ENCODE measurements at regions of chr9 and their contacts with region 1.

Region 1: GRCh38 chr9:75185585-75186170 is 97.4 kb downstream of the OSTF1 start:
- DNase-seq: peak; percentile 65
- ATAC-seq: peak; percentile 90
- H3K4me3 Mint-ChIP-seq: no peak overlapping the region
- H3K27ac Mint-ChIP-seq: no peak overlapping the region
- H3K4me1 Mint-ChIP-seq: peaks cover 18% of the 10 kb centered on the region
- H3K27me3 Mint-ChIP-seq: no peaks in the 10 kb centered on the region
- CTCF ChIP-seq: peak; percentile 77

Region 2: DNA sequence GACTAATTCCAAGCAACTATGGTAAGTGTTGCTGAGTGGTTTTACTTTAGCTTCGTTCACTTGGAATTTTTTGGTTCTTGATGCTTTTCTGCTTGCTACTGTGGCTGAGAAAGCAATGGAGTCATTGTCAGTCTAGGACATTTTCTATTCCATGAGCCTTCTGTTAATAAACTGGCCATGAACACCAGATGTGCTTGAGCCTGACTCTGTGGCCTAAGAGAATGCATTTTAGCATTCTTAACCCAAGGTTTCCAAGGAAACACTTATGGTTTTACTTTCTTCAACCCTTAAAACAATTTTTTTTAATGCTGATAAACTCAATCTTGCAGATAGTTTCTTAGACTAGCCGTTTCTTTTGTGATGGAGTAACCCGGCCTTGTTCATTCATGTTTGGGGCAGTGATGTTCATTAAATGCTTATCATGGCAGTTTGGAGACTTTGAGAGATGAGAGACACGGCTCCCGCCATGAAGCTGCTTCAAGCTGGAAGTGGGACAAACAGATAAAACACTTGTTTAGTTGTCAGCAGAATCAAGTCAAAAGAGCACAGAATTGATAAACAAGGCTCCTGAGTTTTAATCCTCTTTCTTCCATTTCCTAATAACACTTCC is 55.0 kb before region 1 on chr9:
- CTCF ChIA-PET with region 1: interaction called, 12 read pairs
- POLR2A ChIA-PET with region 1: no interaction called
- intact Hi-C with region 1: no loop called
- DNase-seq: no peak
- ATAC-seq: no peak
- H3K4me3 Mint-ChIP-seq: no peak overlapping the region
- H3K27ac Mint-ChIP-seq: no peak overlapping the region
- H3K4me1 Mint-ChIP-seq: peaks cover 21% of the 10 kb centered on the region
- H3K27me3 Mint-ChIP-seq: no peaks in the 10 kb centered on the region
- CTCF ChIP-seq: no peak

Region 3: DNA sequence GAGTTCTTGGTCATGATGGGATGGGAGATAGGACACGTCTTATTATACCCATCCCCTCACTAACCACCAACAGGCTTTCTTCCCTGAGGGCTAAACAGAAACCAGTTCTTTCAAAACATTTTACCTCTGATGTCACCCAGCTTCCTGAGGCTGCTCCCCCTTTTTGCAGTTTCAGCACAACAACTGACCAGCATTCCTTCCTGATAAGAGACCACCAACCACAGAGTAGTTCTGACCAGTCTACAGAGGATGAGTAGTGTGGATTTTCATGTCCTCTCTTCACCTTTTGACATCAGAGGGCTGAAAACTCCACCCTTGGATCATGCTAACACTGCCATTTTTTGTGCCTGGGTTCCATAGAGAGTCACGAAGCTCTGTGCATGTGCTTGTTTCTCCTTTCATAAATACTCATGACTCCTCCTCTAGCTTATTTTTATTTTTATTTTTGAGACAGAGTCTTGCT is 14.7 kb before region 1 on chr9:
- CTCF ChIA-PET with region 1: interaction called, 31 read pairs
- POLR2A ChIA-PET with region 1: no interaction called
- intact Hi-C with region 1: no loop called
- DNase-seq: no peak
- ATAC-seq: no peak
- H3K4me3 Mint-ChIP-seq: no peak overlapping the region
- H3K27ac Mint-ChIP-seq: no peak overlapping the region
- H3K4me1 Mint-ChIP-seq: peaks cover 13% of the 10 kb centered on the region
- H3K27me3 Mint-ChIP-seq: no peaks in the 10 kb centered on the region
- CTCF ChIP-seq: no peak

Region 4: DNA sequence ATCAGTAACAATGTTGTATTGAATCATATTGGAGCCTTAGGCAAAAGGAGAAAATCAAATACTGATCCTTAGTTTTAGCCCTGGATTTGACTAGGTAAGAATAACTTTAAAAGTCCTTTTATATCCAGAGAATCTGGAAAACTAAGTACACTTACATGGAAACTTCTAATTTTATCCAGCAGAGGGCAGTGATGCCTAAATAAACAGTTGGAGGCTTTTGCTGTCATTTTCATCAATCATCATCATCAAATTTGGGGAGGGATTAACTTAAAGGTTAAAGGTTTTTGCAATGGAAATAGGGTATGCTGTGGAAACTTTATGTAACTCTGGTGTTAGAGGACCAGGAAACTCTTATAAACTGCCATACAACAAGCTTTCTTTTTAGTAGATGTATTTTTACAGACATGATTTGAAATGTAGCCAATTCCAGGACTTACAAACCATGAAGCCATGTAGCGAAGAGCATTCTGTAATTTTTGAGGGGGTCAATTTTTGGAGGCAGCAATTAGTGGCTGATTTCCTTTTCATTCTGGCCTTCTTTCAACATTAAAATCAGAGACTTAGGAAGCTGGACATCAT is 15.3 kb after region 1 on chr9:
- CTCF ChIA-PET with region 1: interaction called, 24 read pairs
- POLR2A ChIA-PET with region 1: interaction called, 3 read pairs
- intact Hi-C with region 1: no loop called
- DNase-seq: peak; percentile 19
- ATAC-seq: peak; percentile 70
- H3K4me3 Mint-ChIP-seq: no peak overlapping the region
- H3K27ac Mint-ChIP-seq: peak overlapping the region; percentile 36
- H3K4me1 Mint-ChIP-seq: peaks cover 6% of the 10 kb centered on the region
- H3K27me3 Mint-ChIP-seq: no peaks in the 10 kb centered on the region
- CTCF ChIP-seq: peak; percentile 78